Activated T-helper 1 cell treated with anti-CD3 and anti-CD28 coated beads, Interleukin-12 subunit alpha, Interleukin-12 subunit beta, Interleukin-2, Interleukin-4 antibody, amounts not matched to agents 30 ng/mL and 10 ng/mL and 1 ng/mL, durations not matched to agents 14 hours and 24 hours and 36 hours (primary cell): ENCODE measurements at regions of chr2 and their contacts with region 1.

Region 1: GRCh38 chr2:98086491-98087446 is at the start of gene VWA3B:
- DNase-seq: peak; percentile 57
- H3K4me3 Mint-ChIP-seq: peak within 1 kb of the TSS; percentile 77
- H3K27ac Mint-ChIP-seq: no peak within 1 kb of the TSS
- H3K4me1 Mint-ChIP-seq: peaks cover 25% of the 10 kb centered on the region
- H3K27me3 Mint-ChIP-seq: peaks cover 36% of the 10 kb centered on the region
- total RNA-seq, gene VWA3B: not detected in 2 replicates

Region 2: GRCh38 chr2:98134172-98135005 is 47.6 kb after region 1 on chr2:
- intact Hi-C with region 1: loop called (anchors 2 kb)
- DNase-seq: peak; percentile 36
- H3K4me3 Mint-ChIP-seq: peak overlapping the region; percentile 13
- H3K27ac Mint-ChIP-seq: peak overlapping the region; percentile 52
- H3K4me1 Mint-ChIP-seq: peaks cover 19% of the 10 kb centered on the region
- H3K27me3 Mint-ChIP-seq: peaks cover 9% of the 10 kb centered on the region

Region 3: GRCh38 chr2:98394595-98395153 is 307.9 kb after region 1 on chr2:
- intact Hi-C with region 1: no loop called
- DNase-seq: no peak
- H3K4me3 Mint-ChIP-seq: no peak overlapping the region
- H3K27ac Mint-ChIP-seq: no peak overlapping the region
- H3K4me1 Mint-ChIP-seq: no peaks in the 10 kb centered on the region
- H3K27me3 Mint-ChIP-seq: peaks cover 19% of the 10 kb centered on the region